Mammary epithelial cell (primary cell): ENCODE measurements at regions of chr3 and their contacts with region 1.

Region 1: GRCh38 chr3:65902304-65902793 is 136.4 kb downstream of the MAGI1 start:
- DNase-seq: peak; percentile 80
- H3K4me3 ChIP-seq: peak overlapping the region; percentile 49 to 56 (median 56)
- H3K27ac ChIP-seq: peak overlapping the region; percentile 73
- H3K4me1 ChIP-seq: peaks cover 11% of the 10 kb centered on the region
- H3K27me3 ChIP-seq: no peaks in the 10 kb centered on the region
- CTCF ChIP-seq: no peak

Region 2: DNA sequence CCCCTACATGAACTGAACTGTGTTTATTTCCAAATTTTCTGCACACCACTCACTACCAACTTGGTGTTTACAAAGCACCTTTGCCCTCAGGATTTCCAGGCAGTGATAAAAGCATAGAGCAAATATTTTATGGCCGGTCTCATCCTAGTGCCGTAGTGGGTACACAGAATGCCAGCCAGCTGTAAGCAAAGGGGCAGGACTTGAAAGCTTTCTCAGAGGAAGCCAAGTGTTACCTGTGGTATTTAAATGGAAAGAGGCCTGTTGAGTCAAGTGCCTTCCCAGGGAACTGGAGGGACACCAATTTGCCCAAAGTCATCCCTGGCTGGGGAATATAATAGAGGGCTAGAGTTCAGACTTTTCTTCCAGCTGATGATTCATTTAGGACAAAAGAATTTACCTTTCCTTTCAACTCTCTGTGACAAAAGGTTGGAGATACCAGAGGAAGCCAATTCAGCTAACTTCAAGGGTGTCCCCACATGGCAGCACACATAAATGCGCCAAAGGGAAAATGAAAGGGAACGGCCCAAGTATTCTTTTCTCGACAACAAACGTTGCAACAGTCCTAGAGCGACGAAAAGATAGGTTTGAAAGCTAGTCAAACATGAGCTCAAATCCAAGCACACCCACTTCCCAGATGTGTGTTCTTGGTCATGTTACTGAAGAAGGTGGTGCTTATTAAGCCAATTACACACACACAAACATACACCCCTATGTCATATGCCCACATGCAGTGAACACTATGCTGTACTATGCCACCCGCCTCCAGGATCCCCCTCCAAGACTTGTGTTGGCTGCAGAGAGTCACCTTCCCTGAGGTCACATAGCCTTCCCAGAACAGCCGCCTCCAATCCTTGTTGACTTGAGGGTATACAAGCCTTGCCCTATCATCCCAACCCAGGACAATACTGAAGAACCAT is 108.6 kb after region 1 on chr3:
- CTCF ChIA-PET with region 1: interaction called, 3 read pairs
- dilution Hi-C with region 1: loop called (anchors 5 kb)
- in situ Hi-C with region 1: no loop called
- intact Hi-C with region 1: no loop called
- DNase-seq: peak; percentile 48
- H3K4me3 ChIP-seq: peak overlapping the region; percentile 1 to 38 (median 3)
- H3K27ac ChIP-seq: peak overlapping the region; percentile 42
- H3K4me1 ChIP-seq: peaks cover 17% of the 10 kb centered on the region
- H3K27me3 ChIP-seq: no peaks in the 10 kb centered on the region
- CTCF ChIP-seq: peak in 1 of 2 donors; percentile 11